Activated CD4-positive, alpha-beta memory T cell treated with anti-CD3 and anti-CD28 coated beads for 36 hours (primary cell): ENCODE measurements at regions of chr13 and their contacts with region 1.

Region 1: GRCh38 chr13:100392709-100393641 is 195.6 kb downstream of the GGACT start:
- DNase-seq: peak; percentile 85
- H3K4me3 Mint-ChIP-seq: no peak overlapping the region
- H3K27ac Mint-ChIP-seq: peak overlapping the region; percentile 26
- H3K4me1 Mint-ChIP-seq: peaks cover 27% of the 10 kb centered on the region
- H3K27me3 Mint-ChIP-seq: no peaks in the 10 kb centered on the region

Region 2: GRCh38 chr13:99821741-99822140 is 571.2 kb before region 1 on chr13:
- CTCF ChIA-PET with region 1: no interaction called
- POLR2A ChIA-PET with region 1: no interaction called
- intact Hi-C with region 1: loop called (anchors 1 kb)
- DNase-seq: no peak
- H3K4me3 Mint-ChIP-seq: no peak overlapping the region
- H3K27ac Mint-ChIP-seq: no peak overlapping the region
- H3K4me1 Mint-ChIP-seq: peaks cover 16% of the 10 kb centered on the region
- H3K27me3 Mint-ChIP-seq: no peaks in the 10 kb centered on the region

Region 3: DNA sequence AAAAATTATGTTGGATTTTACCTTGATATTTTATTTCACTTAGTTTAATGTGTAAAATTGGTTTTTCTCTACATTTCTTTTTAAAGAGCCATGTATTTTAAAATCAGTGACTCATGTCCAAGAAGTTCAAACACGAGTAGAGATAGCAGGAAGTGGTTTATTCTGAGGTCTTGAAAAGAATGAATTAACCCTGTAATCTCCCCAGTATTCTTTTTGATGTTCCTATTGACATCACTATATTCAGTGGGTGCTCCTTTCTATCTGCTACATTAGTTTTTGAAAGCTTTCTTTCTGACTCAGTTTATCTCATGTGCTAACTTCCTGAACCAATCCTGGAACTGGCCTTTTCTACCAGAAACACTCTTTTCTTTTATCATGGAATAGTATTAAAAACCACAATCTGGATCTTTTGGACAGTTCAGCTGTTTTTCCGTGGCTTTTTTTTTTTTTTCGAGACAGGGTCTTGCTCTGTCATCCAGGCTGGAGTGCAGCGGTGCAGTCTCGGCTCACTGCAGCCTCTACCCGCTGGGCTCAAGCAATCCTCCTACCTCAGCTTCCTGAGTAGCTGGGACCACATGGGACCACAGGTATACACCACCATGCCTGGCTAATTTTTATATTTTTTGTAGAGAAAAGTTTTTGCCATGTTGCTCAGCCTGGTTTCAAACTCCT is 189.1 kb before region 1 on chr13:
- CTCF ChIA-PET with region 1: no interaction called
- POLR2A ChIA-PET with region 1: no interaction called
- intact Hi-C with region 1: loop called (anchors 5 kb)
- DNase-seq: peak; percentile 14
- H3K4me3 Mint-ChIP-seq: no peak overlapping the region
- H3K27ac Mint-ChIP-seq: peak overlapping the region; percentile 45
- H3K4me1 Mint-ChIP-seq: peaks cover 15% of the 10 kb centered on the region
- H3K27me3 Mint-ChIP-seq: no peaks in the 10 kb centered on the region

Region 4: DNA sequence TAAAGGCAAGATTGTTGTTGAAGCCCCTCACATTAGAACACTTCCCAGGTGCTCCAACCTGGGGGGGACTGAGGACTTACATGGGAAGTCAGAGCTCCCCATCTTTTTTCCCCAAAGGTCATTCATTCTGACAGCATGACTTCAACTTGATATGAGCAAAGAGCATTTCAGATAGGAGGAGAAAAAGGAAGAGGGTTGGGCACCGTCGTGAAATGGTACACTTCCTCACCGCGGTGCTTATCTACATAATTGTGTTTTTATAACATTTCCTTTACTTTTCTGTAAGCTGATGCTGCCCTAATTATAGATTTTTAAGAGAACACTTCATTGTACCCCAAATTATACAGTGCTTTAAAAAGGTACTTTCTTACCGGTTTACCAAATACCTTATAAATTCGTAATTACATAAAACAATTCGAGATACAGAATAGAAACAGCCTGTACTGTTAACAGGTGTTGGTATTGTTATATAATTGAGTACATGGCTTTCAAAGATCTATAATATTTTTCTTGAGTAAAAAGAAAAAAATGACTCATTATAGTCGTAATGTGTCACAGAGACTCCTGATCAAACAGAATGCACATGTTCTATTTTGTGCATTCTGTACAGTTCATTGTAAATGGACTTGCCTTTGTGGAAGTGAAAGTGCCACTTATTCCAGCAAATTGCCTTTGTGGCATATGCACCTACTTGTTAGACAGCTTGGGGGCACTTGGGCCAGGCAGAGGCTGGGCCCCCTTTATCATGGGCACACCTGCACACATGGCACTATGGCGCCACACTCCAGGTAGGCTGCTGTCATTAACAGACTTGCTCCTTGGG is 113.8 kb after region 1 on chr13:
- CTCF ChIA-PET with region 1: no interaction called
- POLR2A ChIA-PET with region 1: no interaction called
- intact Hi-C with region 1: loop called (anchors 1 kb)
- DNase-seq: peak; percentile 18
- H3K4me3 Mint-ChIP-seq: peak overlapping the region; percentile 36
- H3K27ac Mint-ChIP-seq: no peak overlapping the region
- H3K4me1 Mint-ChIP-seq: peaks cover 24% of the 10 kb centered on the region
- H3K27me3 Mint-ChIP-seq: peaks cover 27% of the 10 kb centered on the region